ENCODE measurements at regions of chr9 and their contacts with region 1.

Region 1: GRCh38 chr9:126773004-126773607 is 31.7 kb upstream of the ZBTB43 start:
- DNase-seq: no peak
- H3K4me3 ChIP-seq: no peak overlapping the region
- H3K27ac ChIP-seq: no peak overlapping the region
- H3K4me1 ChIP-seq: no peaks in the 10 kb centered on the region
- H3K27me3 ChIP-seq: peaks cover 12% of the 10 kb centered on the region; the same call in 1 of the 2 replicates
- CTCF ChIP-seq: peak; percentile 45

Region 2: DNA sequence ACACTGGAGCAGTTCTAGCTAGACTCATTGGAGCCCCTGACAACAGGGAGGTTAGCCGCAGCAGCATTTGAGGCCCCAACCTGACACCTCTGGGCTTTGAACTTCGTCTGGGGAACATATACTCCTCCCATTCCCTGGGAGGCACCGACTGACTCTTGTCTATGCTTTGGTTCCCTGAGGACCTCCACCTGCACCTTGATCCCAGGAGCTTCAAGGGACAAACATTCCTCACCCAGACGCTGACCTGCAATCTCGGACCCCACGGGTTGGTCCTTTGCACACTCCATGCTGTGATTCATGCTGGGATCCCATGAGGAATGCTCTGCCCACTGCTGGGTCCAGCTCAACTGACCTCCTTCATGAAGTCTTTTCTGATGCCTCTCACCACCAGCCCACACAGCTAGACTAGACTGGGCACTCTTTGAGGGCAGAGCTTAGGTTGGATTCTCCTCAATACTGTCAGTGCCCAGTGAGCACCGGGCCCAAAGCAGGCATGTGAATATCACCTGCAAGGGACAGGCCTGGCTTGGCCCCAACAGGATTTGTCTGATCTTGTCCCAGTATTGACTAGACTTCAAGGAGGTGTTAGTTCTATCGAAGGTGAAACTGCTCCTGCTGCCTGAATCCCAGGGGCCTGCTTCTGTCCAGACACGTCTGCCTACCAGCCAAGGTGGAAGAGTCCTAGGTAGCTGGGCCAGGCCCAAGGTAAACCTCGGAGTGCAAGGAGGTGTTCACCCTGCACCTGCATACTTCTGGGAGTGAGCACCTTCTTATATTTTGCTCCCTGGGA is 20.0 kb before region 1 on chr9:
- CTCF ChIA-PET with region 1: interaction called, 10 read pairs
- POLR2A ChIA-PET with region 1: no interaction called
- intact Hi-C with region 1: no loop called
- DNase-seq: no peak
- H3K4me3 ChIP-seq: no peak overlapping the region
- H3K27ac ChIP-seq: no peak overlapping the region
- H3K4me1 ChIP-seq: no peaks in the 10 kb centered on the region
- H3K27me3 ChIP-seq: peaks cover 70% of the 10 kb centered on the region
- CTCF ChIP-seq: no peak

Region 3: GRCh38 chr9:127489471-127490115 is 716.5 kb after region 1 on chr9:
- CTCF ChIA-PET with region 1: no interaction called
- POLR2A ChIA-PET with region 1: no interaction called
- intact Hi-C with region 1: no loop called
- DNase-seq: no peak
- H3K4me3 ChIP-seq: no peak overlapping the region
- H3K27ac ChIP-seq: no peak overlapping the region
- H3K4me1 ChIP-seq: no peaks in the 10 kb centered on the region
- H3K27me3 ChIP-seq: no peaks in the 10 kb centered on the region
- CTCF ChIP-seq: no peak